ENCODE measurements at regions of chr3 and their contacts with region 1.

Region 1: GRCh38 chr3:14452679-14453367 is 50.4 kb downstream of the SLC6A6 start:
- H3K4me3 ChIP-seq: no peak overlapping the region
- H3K27ac ChIP-seq: peak overlapping the region; percentile 88
- H3K4me1 ChIP-seq: peaks cover 13% of the 10 kb centered on the region
- CTCF ChIP-seq: no peak; the same call in 1 of the 2 replicates

Region 2: GRCh38 chr3:14093831-14094230 is 359.0 kb before region 1 on chr3:
- CTCF ChIA-PET with region 1: no interaction called
- POLR2A ChIA-PET with region 1: no interaction called
- H3K4me3 ChIP-seq: no peak overlapping the region
- H3K27ac ChIP-seq: no peak overlapping the region
- H3K4me1 ChIP-seq: no peaks in the 10 kb centered on the region
- CTCF ChIP-seq: no peak

Region 3: DNA sequence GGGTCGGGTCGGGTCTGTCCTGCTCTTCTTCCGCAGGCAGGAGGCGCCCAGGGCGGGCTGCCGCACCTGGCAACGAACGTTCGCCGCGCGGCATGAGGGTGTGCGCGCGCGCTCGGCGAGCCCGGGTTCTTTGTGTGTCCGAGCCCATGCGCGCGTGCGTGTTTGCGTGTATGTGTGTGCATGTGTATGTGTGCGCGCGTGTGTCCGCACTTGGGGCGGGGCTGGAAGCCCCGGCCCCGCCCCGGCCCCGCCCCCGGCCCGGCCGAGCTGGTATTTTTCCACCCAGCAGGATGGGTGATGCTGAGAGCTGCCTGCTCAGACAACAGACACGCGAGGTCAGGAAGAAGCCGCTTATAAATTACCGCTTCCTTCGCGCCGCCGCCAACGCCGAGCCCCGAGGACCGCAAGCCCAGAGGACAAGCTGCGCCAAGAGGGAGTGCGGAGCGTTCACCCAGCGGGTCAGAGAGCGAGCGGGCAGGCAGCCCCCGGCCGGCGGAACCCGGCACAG is 50.5 kb before region 1 on chr3 and contains the start of gene SLC6A6:
- CTCF ChIA-PET with region 1: interaction called, 3 read pairs
- POLR2A ChIA-PET with region 1: interaction called, 11 read pairs
- H3K4me3 ChIP-seq: peak within 1 kb of the TSS; percentile 51
- H3K27ac ChIP-seq: peak within 1 kb of the TSS; percentile 85
- H3K4me1 ChIP-seq: peaks cover 2% of the 10 kb centered on the region; the same call in 1 of the 2 replicates
- CTCF ChIP-seq: peak; percentile 79; the same call in 1 of the 2 replicates

Region 4: GRCh38 chr3:14431892-14432834 is 20.7 kb before region 1 on chr3:
- CTCF ChIA-PET with region 1: interaction called, 4 read pairs
- POLR2A ChIA-PET with region 1: interaction called, 11 read pairs
- H3K4me3 ChIP-seq: no peak overlapping the region
- H3K27ac ChIP-seq: no peak overlapping the region
- H3K4me1 ChIP-seq: peaks cover 4% of the 10 kb centered on the region
- CTCF ChIP-seq: no peak

Measured in HEK293 (cell line).